Calu3 (cell line): ENCODE measurements at regions of chr3 and their contacts with region 1.

Region 1: DNA sequence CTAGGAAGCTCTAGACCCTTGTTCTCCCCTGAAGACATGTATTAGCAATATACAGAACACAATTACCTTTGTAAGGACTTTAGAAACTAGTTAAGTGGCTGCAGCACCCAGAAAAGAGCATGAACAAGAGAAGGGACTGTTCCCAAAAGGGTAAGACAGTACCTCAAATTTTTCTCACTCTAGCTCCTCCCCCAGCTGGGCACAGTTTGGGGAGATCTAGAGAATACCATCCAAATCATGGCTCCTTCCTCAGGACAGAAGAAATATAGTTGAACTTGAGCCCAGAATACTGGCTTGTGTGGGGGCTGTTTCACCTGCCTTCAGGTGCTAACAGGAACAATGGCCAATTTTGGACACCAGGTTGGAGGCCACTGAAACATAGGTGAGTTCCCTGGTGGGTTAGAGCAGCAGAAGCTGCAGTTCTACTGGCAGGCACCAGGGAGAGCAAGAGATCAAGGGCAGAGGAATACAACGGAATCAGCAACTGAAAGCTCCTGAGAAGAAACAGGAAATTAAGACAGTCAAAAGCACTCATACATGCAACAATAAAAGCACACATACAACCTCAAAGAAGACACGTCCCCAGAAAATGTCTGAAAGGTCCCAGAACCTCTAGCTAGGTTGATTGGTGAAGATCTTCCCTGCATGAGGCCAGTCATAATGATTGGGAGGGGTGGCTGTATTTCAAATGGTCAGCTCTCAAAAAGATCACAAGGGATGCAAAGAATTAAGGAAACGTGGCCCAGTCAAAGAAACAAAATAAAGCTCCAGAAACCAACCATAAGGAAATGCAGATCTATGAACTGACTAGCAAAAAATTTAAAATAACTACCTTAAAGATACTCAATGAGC is 104.9 kb upstream of the ASB14 start:
- DNase-seq: peak; percentile 79
- H3K4me3 Mint-ChIP-seq: no peak overlapping the region
- H3K27ac Mint-ChIP-seq: peak overlapping the region; percentile 48
- H3K4me1 Mint-ChIP-seq: peaks cover 23% of the 10 kb centered on the region
- H3K27me3 Mint-ChIP-seq: no peaks in the 10 kb centered on the region
- CTCF ChIP-seq: peak; percentile 65

Region 2: DNA sequence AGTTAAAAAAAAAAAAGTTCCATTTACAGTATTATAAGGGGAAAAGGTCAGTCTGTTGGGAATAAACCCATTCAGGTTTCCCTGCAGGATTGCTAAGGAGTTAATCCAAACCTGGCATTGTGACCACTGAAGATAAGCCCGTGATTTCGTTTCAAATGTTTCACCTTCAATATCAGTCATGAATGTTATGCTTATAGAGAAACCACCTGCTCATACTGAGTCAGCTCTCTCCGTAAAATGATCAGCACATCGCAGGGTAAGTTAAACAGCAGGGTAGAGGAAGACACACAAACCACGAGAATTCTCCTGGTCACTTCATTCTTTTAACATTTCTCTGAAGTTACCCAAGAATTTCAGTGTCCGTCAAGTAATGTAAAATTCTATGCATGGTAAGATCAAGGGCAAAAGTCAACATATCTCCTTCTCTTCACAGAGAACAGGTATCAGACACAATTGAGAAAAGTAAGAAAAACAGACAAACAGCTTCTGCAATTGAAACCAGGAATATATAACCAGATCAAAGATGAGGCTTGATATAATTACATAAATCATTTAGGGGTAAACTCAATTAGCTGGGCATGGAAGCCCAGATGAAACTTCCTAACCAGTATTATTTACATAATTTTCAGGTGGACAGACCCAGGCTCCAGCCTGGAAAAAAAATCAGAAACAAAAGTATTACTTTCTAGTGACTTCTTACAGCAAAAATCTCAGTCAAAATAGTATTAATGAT is 528.1 kb before region 1 on chr3:
- CTCF ChIA-PET with region 1: no interaction called
- intact Hi-C with region 1: no loop called
- DNase-seq: no peak
- H3K4me3 Mint-ChIP-seq: no peak overlapping the region
- H3K27ac Mint-ChIP-seq: no peak overlapping the region
- H3K4me1 Mint-ChIP-seq: no peaks in the 10 kb centered on the region
- H3K27me3 Mint-ChIP-seq: no peaks in the 10 kb centered on the region
- CTCF ChIP-seq: no peak

Region 3: DNA sequence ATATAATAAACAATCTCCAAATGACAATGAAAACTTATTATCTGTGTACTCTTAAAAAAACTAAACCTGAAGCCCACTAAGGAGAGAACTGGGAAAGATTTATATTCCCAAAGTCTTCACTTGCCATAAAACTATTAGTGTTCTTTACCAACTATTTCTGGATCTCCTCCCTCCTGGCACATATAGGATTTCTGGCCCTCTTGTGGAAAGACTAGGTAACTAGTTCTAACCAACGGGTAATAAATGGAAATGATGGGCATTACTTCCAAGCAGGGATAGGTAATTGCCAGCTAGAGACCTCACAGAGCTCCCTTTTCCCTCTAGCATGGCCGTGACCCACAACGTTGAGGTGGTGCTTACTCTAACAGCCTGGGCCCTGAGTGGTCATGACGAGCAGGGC is 36.6 kb after region 1 on chr3:
- CTCF ChIA-PET with region 1: interaction called, 19 read pairs
- intact Hi-C with region 1: loop called (anchors 1 kb)
- DNase-seq: peak; percentile 6
- H3K4me3 Mint-ChIP-seq: no peak overlapping the region
- H3K27ac Mint-ChIP-seq: no peak overlapping the region
- H3K4me1 Mint-ChIP-seq: peaks cover 21% of the 10 kb centered on the region
- H3K27me3 Mint-ChIP-seq: no peaks in the 10 kb centered on the region
- CTCF ChIP-seq: no peak

Region 4: GRCh38 chr3:57555738-57556458 is 158.5 kb after region 1 on chr3 and contains the start of gene PDE12:
- CTCF ChIA-PET with region 1: interaction called, 5 read pairs
- intact Hi-C with region 1: loop called (anchors 2 kb)
- DNase-seq: peak; percentile 86
- H3K4me3 Mint-ChIP-seq: peak within 1 kb of the TSS; percentile 58
- H3K27ac Mint-ChIP-seq: peak within 1 kb of the TSS; percentile 95
- H3K4me1 Mint-ChIP-seq: no peaks in the 10 kb centered on the region
- H3K27me3 Mint-ChIP-seq: no peaks in the 10 kb centered on the region
- CTCF ChIP-seq: no peak
- total RNA-seq, gene PDE12: 27.4 and 32.4 TPM in 2 replicates

Region 5: DNA sequence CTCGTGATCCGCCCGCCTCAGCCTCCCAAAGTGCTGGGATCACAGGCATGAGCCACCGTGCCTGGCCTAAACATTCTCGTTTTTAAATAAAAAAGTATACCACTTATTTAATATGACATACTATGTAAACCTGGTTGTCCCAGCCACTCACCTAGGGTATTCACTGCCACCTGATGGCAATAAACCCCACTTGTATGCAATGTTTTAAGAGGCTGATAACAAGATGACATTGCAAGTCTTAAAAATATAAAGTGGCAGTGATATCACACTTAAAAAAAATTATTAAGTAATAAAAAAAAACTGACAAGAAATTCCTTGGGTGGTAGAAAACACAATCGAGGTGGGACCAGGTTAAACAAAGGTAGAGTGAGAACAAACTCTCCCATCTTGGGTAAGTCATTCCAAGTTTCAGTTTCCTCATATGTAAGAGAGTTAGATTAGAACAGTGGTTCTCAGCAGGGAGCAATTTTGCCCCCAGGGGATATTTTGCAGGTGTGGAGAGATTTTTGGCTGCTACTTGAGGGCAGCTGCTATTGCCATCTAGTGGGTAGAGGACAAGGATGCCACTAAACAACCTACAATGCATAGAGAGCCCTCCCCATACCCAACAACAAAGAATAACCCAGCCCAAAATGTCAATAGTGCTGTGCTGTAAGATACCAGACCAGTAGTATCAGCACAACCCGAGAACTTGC is 185.2 kb after region 1 on chr3:
- CTCF ChIA-PET with region 1: interaction called, 7 read pairs
- intact Hi-C with region 1: loop called (anchors 1 kb)
- DNase-seq: peak; percentile 76
- H3K4me3 Mint-ChIP-seq: no peak overlapping the region
- H3K27ac Mint-ChIP-seq: no peak overlapping the region
- H3K4me1 Mint-ChIP-seq: peaks cover 21% of the 10 kb centered on the region
- H3K27me3 Mint-ChIP-seq: no peaks in the 10 kb centered on the region
- CTCF ChIP-seq: no peak